ENCODE measurements at regions of chr2 and their contacts with region 1.

Region 1: DNA sequence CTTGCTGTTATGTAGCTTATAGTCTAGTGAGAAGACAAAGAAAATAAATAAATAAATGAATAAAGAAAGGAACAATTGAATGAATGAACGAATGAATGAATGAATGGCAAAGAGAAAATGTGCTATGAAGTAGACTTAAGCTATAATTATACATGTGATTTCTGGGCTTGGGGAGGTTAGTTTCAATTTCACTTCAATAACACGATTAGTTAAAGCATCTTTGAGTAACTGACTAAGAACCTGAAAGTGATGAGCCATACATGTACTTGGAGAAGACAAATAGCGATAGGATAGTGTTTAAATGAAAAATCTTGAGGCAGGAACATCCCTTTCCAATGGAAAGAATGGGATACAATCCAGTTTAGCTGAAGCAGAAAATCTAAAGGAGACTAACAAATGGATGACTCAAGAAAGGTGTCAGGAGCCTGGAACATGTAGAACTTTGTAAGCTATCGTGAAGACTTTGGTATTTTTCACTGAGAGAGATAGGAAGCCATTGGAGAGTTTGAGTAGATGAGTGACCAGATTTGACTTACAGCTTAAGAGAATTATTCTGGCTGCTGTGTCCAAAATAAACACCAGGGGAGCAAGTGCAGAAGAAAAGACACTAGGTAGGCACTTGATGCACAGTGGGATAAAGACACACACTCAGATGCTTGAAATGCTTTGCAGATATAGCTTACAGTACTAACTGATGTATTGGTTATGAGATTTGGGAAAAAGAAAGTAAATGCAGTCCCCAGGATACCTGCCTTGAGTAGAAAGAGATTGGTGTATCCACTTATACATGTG is 593.3 kb upstream of the LRRTM4 start:
- DNase-seq: peak in 1 of 2 experiments; percentile 20
- H3K4me3 ChIP-seq: no peak overlapping the region
- H3K4me3 Mint-ChIP-seq: no peak overlapping the region
- H3K27ac Mint-ChIP-seq: no peak overlapping the region
- H3K4me1 ChIP-seq: no peaks in the 10 kb centered on the region
- H3K4me1 Mint-ChIP-seq: peaks cover 6% of the 10 kb centered on the region
- H3K27me3 ChIP-seq: no peaks in the 10 kb centered on the region
- H3K27me3 Mint-ChIP-seq: no peaks in the 10 kb centered on the region
- CTCF ChIP-seq: peak; percentile 44

Region 2: DNA sequence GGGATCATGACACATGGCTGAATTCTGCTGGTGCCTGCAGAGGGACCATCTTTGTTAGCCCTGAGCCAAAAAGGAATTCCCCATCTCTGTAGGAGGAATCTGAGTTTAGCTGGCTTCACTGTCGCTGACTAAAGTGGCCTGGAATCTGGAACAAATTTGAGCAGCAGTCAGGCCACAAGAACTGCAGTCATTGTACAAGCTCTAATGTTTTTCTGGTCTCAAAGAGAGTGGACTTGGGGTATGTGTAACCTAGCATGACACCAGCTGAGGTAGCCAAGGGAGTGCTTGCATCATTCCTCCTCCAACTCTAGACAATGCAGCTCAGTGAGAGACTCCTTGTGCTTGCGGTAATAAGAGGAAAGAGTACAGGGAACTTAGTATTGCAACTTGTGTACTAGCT is 54.2 kb before region 1 on chr2:
- CTCF ChIA-PET with region 1: no interaction called
- POLR2A ChIA-PET with region 1: no interaction called
- intact Hi-C with region 1: no loop called
- DNase-seq: no peak
- H3K4me3 ChIP-seq: no peak overlapping the region
- H3K4me3 Mint-ChIP-seq: no peak overlapping the region
- H3K27ac Mint-ChIP-seq: no peak overlapping the region
- H3K4me1 ChIP-seq: no peaks in the 10 kb centered on the region
- H3K4me1 Mint-ChIP-seq: no peaks in the 10 kb centered on the region
- H3K27me3 ChIP-seq: no peaks in the 10 kb centered on the region
- H3K27me3 Mint-ChIP-seq: no peaks in the 10 kb centered on the region
- CTCF ChIP-seq: no peak

Region 3: GRCh38 chr2:78162202-78162601 is 46.7 kb after region 1 on chr2:
- CTCF ChIA-PET with region 1: no interaction called
- POLR2A ChIA-PET with region 1: no interaction called
- intact Hi-C with region 1: loop called (anchors 2 kb)
- DNase-seq: peak; percentile 71 to 72
- H3K4me3 ChIP-seq: no peak overlapping the region
- H3K4me3 Mint-ChIP-seq: peak overlapping the region; percentile 16
- H3K27ac Mint-ChIP-seq: no peak overlapping the region
- H3K4me1 ChIP-seq: peaks cover 15% of the 10 kb centered on the region
- H3K4me1 Mint-ChIP-seq: peaks cover 23% of the 10 kb centered on the region
- H3K27me3 ChIP-seq: no peaks in the 10 kb centered on the region
- H3K27me3 Mint-ChIP-seq: peaks cover 4% of the 10 kb centered on the region
- CTCF ChIP-seq: no peak

Region 4: GRCh38 chr2:78237704-78238103 is 122.2 kb after region 1 on chr2:
- CTCF ChIA-PET with region 1: no interaction called
- POLR2A ChIA-PET with region 1: no interaction called
- intact Hi-C with region 1: no loop called
- DNase-seq: no peak
- H3K4me3 ChIP-seq: no peak overlapping the region
- H3K4me3 Mint-ChIP-seq: no peak overlapping the region
- H3K27ac Mint-ChIP-seq: no peak overlapping the region
- H3K4me1 ChIP-seq: no peaks in the 10 kb centered on the region
- H3K4me1 Mint-ChIP-seq: no peaks in the 10 kb centered on the region
- H3K27me3 ChIP-seq: no peaks in the 10 kb centered on the region
- H3K27me3 Mint-ChIP-seq: no peaks in the 10 kb centered on the region
- CTCF ChIP-seq: no peak

Measured in Caco-2 (cell line).